Left ventricle myocardium inferior (tissue), 1 donor: ENCODE measurements at regions of chr5 and their contacts with region 1.

Region 1: DNA sequence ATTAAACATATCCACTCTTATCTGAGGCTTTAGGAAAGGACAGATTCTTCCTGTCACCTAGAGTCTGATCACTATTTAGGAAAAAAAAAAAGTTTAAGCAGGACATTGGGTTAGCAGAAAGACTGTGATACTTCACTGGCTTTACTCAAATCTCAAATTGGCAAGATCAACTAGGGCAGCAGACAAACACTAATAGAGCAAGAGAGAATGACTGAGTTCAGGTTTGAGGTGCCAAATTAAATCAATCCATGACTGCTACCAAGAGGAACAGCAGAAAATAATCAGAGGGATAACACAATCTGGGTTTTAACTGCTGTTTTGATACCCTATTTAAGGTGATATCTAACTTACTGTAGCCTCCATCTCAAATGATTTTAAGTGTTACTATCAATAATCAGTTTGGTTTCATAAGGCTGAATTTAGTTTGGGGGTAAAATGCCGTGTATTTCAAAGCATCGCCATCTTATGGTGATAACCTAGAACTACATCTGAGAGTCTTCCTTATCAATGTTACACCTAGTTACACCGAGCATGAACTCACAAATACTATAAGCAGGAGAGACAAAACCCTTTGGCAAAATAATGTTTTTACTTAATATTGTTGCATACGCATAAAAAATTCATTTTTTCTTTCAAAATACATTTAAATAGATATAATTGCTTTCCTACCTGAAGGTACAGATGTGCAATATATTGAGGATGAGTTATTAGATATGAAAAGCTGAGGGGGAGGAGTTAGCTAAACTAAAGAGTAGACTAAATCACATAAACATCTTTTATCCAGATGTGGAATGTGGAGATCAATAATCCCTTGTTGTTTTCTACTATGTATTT is 286.4 kb upstream of the CDH12 start:
- DNase-seq: no peak
- H3K4me3 ChIP-seq: no peak overlapping the region
- H3K27ac ChIP-seq: no peak overlapping the region
- H3K4me1 ChIP-seq: no peaks in the 10 kb centered on the region
- H3K27me3 ChIP-seq: no peaks in the 10 kb centered on the region
- CTCF ChIP-seq: peak; percentile 64

Region 2: GRCh38 chr5:22889718-22890117 is 249.8 kb before region 1 on chr5:
- intact Hi-C with region 1: loop called (anchors 10 kb)
- DNase-seq: no peak
- H3K4me3 ChIP-seq: no peak overlapping the region
- H3K27ac ChIP-seq: no peak overlapping the region
- H3K4me1 ChIP-seq: no peaks in the 10 kb centered on the region
- H3K27me3 ChIP-seq: no peaks in the 10 kb centered on the region
- CTCF ChIP-seq: peak; percentile 49

Region 3: DNA sequence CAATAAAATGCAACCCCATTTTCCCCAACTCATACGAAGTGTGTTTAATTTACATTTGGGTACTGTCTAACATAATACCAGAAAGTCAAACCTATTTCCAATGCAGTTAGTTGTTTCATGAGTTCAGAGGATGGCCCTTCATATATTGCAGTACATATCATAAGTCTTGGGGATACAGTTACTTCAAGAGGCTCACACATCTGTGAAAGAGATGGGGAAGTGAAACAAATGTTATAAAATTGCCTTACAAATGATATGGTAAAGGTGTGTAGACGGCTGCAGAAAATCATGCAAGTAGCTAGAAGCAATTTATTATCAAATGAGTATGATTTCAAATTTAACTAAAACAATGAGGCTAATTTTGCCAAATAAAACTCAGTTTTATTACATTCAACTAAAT is 67.4 kb before region 1 on chr5:
- intact Hi-C with region 1: no loop called
- DNase-seq: no peak
- H3K4me3 ChIP-seq: no peak overlapping the region
- H3K27ac ChIP-seq: no peak overlapping the region
- H3K4me1 ChIP-seq: no peaks in the 10 kb centered on the region
- H3K27me3 ChIP-seq: no peaks in the 10 kb centered on the region
- CTCF ChIP-seq: no peak

Region 4: DNA sequence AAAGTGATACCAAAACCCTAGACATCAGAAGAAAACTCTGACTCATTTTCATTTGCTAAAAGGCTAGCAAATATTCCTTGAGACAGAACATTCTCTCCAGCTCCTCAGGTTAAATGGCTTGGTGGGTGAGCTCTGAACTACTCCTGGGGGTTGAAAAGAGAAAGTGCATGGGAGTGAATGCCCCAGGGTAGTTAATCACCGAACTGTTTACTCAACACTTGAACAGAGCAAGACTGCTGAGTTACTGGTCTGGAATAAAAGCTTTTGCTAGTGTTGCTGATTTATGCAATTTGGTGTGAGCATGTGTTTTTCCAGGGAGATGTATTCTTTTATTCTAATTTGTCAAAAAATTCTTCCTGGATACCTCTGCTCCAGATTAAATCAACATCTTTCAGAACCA is 279.6 kb after region 1 on chr5:
- intact Hi-C with region 1: no loop called
- DNase-seq: no peak
- H3K4me3 ChIP-seq: no peak overlapping the region
- H3K27ac ChIP-seq: no peak overlapping the region
- H3K4me1 ChIP-seq: no peaks in the 10 kb centered on the region
- H3K27me3 ChIP-seq: no peaks in the 10 kb centered on the region
- CTCF ChIP-seq: no peak